ENCODE measurements at regions of chr18 and their contacts with region 1.

Region 1: GRCh38 chr18:46155641-46156051 is 51.5 kb downstream of the HAUS1 start:
- DNase-seq: no peak
- ATAC-seq: peak in 1 of 4 donors; percentile 35
- H3K4me3 ChIP-seq: no peak overlapping the region
- H3K27ac ChIP-seq: no peak overlapping the region
- H3K4me1 ChIP-seq: no peaks in the 10 kb centered on the region
- H3K27me3 ChIP-seq: no peaks in the 10 kb centered on the region
- CTCF ChIP-seq: no peak

Region 2: DNA sequence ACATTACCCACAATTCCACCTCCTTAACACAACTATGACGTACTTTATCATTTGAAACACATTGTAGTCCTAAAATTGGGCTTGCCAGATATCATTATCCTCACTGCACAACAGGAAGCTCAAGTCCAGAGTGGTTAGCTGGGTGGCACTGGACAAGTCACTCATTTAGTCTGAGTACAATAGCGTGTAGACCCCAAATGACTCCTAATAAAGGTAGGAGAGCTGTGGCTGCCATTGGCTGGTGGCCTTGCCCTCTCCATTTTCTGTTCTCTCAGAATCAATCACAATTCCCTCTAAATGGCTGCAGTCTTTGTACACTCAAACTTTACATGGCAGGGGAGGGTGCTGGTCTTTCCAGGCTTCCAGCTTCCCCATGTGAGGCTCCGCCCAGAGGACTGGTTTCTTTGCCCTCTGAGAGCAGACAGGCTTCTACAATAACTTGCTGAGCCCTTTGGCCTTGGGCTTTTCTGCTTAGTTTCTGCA is 95.2 kb before region 1 on chr18:
- intact Hi-C with region 1: no loop called
- DNase-seq: no peak
- ATAC-seq: no peak
- H3K4me3 ChIP-seq: no peak overlapping the region
- H3K27ac ChIP-seq: no peak overlapping the region
- H3K4me1 ChIP-seq: no peaks in the 10 kb centered on the region
- H3K27me3 ChIP-seq: no peaks in the 10 kb centered on the region
- CTCF ChIP-seq: no peak

Region 3: DNA sequence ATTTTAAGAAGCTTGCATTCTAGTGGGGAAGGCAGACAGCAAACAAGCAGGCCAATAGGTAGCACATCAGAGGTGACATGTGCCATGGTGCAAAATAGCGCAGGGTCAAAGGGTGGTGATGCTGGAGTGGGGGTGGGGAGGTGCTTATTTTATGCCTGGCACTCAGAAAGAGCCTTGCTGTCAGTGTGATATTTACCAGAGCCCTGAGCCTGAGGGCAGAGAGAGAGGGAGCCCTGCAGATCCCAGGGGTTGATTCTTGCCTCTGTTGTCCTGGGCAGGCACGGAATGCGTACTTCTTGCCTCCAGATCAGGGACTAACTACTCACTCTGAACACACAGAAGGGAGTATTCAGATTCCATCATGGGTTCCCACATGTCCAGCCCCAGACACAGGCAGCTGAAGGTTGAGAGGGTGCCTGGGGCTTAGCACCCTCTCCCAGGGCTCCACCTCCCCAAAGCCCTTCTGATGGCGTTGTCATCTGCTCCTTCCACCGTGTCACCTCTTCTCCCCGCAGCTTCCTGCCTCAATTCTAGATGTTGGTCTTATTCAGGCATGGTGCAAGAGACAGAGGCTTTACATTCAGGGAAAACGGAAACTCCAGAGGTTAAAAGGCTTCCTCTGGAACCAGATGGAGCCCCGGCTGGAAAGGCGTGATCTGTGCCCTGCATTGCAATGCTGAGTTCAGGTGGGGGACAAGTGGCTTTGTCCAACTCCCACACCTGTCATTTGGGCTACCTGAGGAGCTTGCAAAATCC is 200.8 kb after region 1 on chr18:
- intact Hi-C with region 1: no loop called
- DNase-seq: no peak
- ATAC-seq: no peak
- H3K4me3 ChIP-seq: no peak overlapping the region
- H3K27ac ChIP-seq: no peak overlapping the region
- H3K4me1 ChIP-seq: no peaks in the 10 kb centered on the region
- H3K27me3 ChIP-seq: no peaks in the 10 kb centered on the region
- CTCF ChIP-seq: no peak

Region 4: GRCh38 chr18:46650681-46651080 is 495.0 kb after region 1 on chr18:
- intact Hi-C with region 1: loop called in 2 of 3 experiments (anchors 5 to 10 kb)
- DNase-seq: no peak
- ATAC-seq: no peak
- H3K4me3 ChIP-seq: no peak overlapping the region
- H3K27ac ChIP-seq: no peak overlapping the region
- H3K4me1 ChIP-seq: no peaks in the 10 kb centered on the region
- H3K27me3 ChIP-seq: no peaks in the 10 kb centered on the region
- CTCF ChIP-seq: no peak

Region 5: DNA sequence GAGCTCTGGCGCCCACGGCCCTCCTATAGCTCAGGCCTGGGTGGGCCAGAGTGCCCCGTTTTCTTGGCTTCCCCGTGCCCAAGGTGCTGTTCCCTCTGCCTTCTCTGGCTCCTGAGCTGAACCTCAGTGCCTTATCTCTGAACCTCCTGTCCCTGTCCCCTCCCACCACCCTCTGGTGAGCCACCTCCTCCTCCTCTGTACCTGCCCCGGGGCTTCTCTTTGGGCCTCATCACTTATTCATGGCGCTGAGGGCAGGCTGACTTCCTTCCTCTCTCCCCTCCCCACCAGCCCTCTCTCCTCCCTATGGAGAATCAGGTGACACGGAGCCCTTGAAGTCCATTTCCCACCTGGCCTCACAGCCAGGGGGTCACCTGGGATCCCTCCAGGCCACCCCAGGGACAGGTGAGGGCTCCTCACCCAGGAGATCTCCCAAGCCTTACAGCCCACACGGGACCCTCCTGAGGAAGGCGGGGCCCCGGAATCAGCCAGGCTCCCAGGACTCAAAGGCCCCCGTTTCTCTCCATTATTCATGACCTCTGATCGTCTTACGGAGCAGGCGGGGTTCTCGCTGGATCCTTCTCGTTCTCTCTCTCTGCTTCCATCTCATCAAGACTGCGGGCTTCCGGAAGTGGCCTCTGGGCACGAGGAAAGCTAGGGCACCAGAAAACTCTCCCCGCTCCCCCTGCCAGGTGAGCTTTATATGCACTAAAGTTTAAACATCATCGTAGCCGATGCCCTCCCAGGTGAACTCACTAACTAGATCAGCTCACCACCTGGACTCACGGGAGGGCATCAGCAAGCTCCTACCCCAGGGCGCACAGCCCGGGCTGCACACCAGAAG is 501.7 kb after region 1 on chr18 and contains the start of gene LOXHD1:
- intact Hi-C with region 1: loop called in 2 of 3 experiments (anchors 5 to 10 kb)
- DNase-seq: peak in 1 of 6 donors; percentile 39
- ATAC-seq: no peak
- H3K4me3 ChIP-seq: no peak within 1 kb of the TSS
- H3K27ac ChIP-seq: no peak within 1 kb of the TSS
- H3K4me1 ChIP-seq: no peaks in the 10 kb centered on the region
- H3K27me3 ChIP-seq: no peaks in the 10 kb centered on the region
- CTCF ChIP-seq: no peak
- total RNA-seq, gene LOXHD1: 0.12 to 0.16 (median 0.15) TPM in 4 of 6 donors, not detected in the others